ENCODE measurements at regions of chr1 and their contacts with region 1.

Region 1: GRCh38 chr1:40161125-40161887 is at the start of gene RLF:
- DNase-seq: peak; percentile 97
- H3K4me3 Mint-ChIP-seq: peak within 1 kb of the TSS; percentile 10
- H3K27ac Mint-ChIP-seq: no peak within 1 kb of the TSS
- H3K4me1 Mint-ChIP-seq: peaks cover 5% of the 10 kb centered on the region
- H3K27me3 Mint-ChIP-seq: no peaks in the 10 kb centered on the region
- total RNA-seq, gene RLF: 12.5 to 12.9 TPM

Region 2: GRCh38 chr1:39954816-39955546 is 206.3 kb before region 1 on chr1 and contains the start of gene MFSD2A:
- CTCF ChIA-PET with region 1: no interaction called
- intact Hi-C with region 1: no loop called
- DNase-seq: peak; percentile 89
- H3K4me3 Mint-ChIP-seq: peak within 1 kb of the TSS; percentile 88
- H3K27ac Mint-ChIP-seq: peak within 1 kb of the TSS; percentile 77
- H3K4me1 Mint-ChIP-seq: peaks cover 33% of the 10 kb centered on the region
- H3K27me3 Mint-ChIP-seq: no peaks in the 10 kb centered on the region
- total RNA-seq, gene MFSD2A: 4.0 to 4.5 TPM

Region 3: DNA sequence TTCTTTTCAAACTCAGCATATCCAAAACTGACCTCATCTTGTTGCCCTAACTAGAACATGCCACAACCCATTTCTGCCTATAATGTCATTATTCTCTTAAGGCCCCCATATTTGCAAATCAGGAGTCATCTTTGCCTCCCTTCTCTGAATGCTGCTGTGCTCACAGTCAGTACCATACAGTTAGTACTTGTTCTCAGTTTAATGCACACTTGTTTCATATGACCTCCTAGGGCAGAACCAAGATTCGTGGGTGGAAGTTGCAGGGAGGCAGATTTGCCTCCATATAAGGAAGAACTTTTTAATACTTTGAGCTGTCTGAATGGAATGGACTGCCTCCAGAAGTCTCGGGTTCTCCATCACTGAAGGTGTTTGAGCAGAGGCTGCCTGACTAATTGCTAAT is 111.6 kb before region 1 on chr1:
- CTCF ChIA-PET with region 1: no interaction called
- intact Hi-C with region 1: loop called (anchors 5 kb)
- DNase-seq: peak; percentile 45
- H3K4me3 Mint-ChIP-seq: peak overlapping the region; percentile 52
- H3K27ac Mint-ChIP-seq: peak overlapping the region; percentile 90
- H3K4me1 Mint-ChIP-seq: peaks cover 82% of the 10 kb centered on the region
- H3K27me3 Mint-ChIP-seq: no peaks in the 10 kb centered on the region

Region 4: DNA sequence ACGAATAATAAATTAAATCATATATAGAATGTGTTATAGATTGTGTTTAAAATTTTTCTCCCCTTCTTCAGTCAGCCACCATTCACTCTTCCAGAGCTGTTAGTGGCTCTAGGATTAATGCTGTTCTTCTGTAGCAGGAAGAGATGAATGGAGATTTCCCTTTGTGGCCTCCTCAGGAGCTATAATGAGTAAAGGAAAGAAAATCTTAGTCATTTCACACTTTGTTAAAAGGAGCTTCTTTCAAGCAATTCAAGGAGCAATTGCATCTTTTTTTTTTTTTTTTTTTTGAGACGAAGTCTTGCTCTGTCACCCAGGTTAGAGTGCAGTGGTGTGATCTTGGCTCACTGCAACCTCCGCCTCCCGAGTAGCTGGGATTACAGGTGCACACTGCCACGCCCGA is 62.7 kb after region 1 on chr1:
- CTCF ChIA-PET with region 1: interaction called, 3 read pairs
- intact Hi-C with region 1: loop called (anchors 2 kb)
- DNase-seq: peak; percentile 42
- H3K4me3 Mint-ChIP-seq: no peak overlapping the region
- H3K27ac Mint-ChIP-seq: no peak overlapping the region
- H3K4me1 Mint-ChIP-seq: peaks cover 15% of the 10 kb centered on the region
- H3K27me3 Mint-ChIP-seq: no peaks in the 10 kb centered on the region

Region 5: GRCh38 chr1:40257688-40258444 is 96.6 kb after region 1 on chr1 and contains the start of gene ZMPSTE24:
- CTCF ChIA-PET with region 1: no interaction called
- intact Hi-C with region 1: loop called (anchors 1 kb)
- DNase-seq: peak; percentile 98
- H3K4me3 Mint-ChIP-seq: peak within 1 kb of the TSS; percentile 99
- H3K27ac Mint-ChIP-seq: peak within 1 kb of the TSS; percentile 100
- H3K4me1 Mint-ChIP-seq: peaks cover 35% of the 10 kb centered on the region
- H3K27me3 Mint-ChIP-seq: no peaks in the 10 kb centered on the region
- total RNA-seq, gene ZMPSTE24: 13.2 to 14.7 TPM

Region 6: DNA sequence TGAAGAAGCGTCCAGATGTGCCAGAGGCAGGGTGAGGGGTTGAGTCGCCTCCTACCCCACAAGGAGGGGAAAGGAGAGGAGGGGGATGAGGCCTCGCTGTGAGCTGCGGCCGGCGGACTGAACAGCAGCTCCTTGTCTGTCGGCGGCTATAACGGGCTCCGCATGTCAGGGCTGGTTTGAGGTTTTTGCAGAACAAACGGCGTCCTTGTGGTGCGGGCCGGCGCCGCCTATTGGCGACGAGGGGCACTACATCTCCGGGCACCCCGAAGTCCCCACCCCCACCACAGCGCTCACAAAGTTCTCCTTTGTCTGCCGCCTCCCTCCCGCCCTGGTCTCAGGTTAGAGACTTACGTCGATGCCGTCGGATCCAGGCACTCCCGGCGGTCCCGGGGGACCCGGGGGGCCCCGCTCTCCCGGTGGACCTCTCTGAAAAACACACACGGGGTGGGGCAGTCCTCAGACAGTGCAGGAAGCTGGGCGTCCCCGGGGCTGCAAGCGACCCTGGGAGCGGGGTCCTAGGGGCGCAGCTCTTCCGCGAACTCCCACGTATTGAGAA is 154.0 kb after region 1 on chr1:
- CTCF ChIA-PET with region 1: interaction called, 11 read pairs
- intact Hi-C with region 1: loop called (anchors 1 kb)
- DNase-seq: peak; percentile 90
- H3K4me3 Mint-ChIP-seq: peak overlapping the region; percentile 76
- H3K27ac Mint-ChIP-seq: no peak overlapping the region
- H3K4me1 Mint-ChIP-seq: peaks cover 28% of the 10 kb centered on the region
- H3K27me3 Mint-ChIP-seq: peaks cover 7% of the 10 kb centered on the region

Region 7: DNA sequence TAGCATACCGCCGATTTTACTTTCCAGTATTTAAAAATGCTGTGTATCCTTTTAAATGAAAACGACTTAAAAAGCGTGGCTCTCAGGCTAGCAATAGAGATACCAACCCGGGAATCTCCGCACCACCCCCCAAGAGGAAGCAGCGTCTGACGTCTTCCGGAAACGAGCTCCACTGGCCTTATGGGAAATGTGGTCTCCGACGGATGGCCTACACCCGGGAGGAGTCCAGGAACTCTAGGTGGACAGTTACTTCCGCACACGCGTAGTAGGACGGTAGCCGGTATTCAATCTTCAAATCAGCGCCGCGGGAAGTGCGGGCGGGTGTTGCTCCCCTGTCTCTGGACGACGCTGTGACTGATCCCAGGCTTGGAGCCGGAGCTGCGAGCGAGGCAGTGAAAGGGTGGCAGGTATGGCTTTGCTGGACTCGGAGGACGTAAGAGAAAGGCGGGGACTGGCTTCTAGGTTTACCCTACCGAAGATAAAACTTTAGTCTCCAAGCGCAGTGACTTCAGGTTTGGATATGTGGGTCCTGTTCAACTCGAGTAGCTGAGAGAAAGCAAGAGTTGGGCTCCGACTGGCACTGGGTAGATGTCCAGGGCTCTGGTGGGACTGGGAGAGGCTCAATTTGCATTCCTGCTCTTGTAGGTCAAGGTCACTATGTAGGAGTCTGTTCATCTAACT is 370.2 kb after region 1 on chr1 and contains the start of gene ZNF684:
- CTCF ChIA-PET with region 1: no interaction called
- intact Hi-C with region 1: loop called (anchors 1 kb)
- DNase-seq: peak; percentile 94
- H3K4me3 Mint-ChIP-seq: peak within 1 kb of the TSS; percentile 99
- H3K27ac Mint-ChIP-seq: peak within 1 kb of the TSS; percentile 91
- H3K4me1 Mint-ChIP-seq: peaks cover 18% of the 10 kb centered on the region
- H3K27me3 Mint-ChIP-seq: peaks cover 4% of the 10 kb centered on the region
- total RNA-seq, gene ZNF684: 6.8 to 7.0 TPM

Measured in activated naive CD4-positive, alpha-beta T cell treated with anti-CD3 and anti-CD28 coated beads for 36 hours (primary cell).